Activated B cell treated with CpG ODN at 0.5 μM for 24 hours (primary cell): ENCODE measurements at regions of chr5 and their contacts with region 1.

Region 1: GRCh38 chr5:78221964-78222451 is 72.5 kb downstream of the AP3B1 start:
- DNase-seq: peak; percentile 47
- ATAC-seq: peak; percentile 100
- H3K4me3 Mint-ChIP-seq: peak overlapping the region; percentile 1
- H3K27ac Mint-ChIP-seq: peak overlapping the region; percentile 54
- H3K4me1 Mint-ChIP-seq: peaks cover 18% of the 10 kb centered on the region
- H3K27me3 Mint-ChIP-seq: no peaks in the 10 kb centered on the region
- CTCF ChIP-seq: no peak

Region 2: DNA sequence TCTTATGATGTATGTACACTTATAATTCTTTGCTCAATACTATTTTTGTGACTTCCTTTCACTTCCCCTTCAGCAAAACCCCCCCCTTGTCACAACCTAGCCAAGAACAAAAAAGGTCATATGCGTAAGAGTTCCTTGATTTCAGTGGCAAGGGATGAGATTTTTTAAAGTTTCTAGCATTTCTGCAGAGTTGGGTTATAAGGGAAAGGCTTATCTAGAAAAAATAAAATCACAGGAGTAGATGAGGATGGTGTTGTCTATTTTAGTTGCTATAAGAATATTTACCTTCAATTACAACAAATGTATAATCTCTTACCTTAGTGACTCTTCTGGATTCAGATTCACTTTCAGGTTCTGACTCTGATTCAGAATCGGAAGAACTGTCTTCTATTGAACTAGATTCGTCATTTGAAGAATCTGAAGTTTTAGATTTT is 112.1 kb before region 1 on chr5:
- CTCF ChIA-PET with region 1: no interaction called
- POLR2A ChIA-PET with region 1: no interaction called
- intact Hi-C with region 1: loop called (anchors 2 kb)
- DNase-seq: no peak
- ATAC-seq: peak; percentile 76
- H3K4me3 Mint-ChIP-seq: peak overlapping the region; percentile 75
- H3K27ac Mint-ChIP-seq: peak overlapping the region; percentile 87
- H3K4me1 Mint-ChIP-seq: peaks cover 69% of the 10 kb centered on the region
- H3K27me3 Mint-ChIP-seq: no peaks in the 10 kb centered on the region
- CTCF ChIP-seq: no peak

Region 3: DNA sequence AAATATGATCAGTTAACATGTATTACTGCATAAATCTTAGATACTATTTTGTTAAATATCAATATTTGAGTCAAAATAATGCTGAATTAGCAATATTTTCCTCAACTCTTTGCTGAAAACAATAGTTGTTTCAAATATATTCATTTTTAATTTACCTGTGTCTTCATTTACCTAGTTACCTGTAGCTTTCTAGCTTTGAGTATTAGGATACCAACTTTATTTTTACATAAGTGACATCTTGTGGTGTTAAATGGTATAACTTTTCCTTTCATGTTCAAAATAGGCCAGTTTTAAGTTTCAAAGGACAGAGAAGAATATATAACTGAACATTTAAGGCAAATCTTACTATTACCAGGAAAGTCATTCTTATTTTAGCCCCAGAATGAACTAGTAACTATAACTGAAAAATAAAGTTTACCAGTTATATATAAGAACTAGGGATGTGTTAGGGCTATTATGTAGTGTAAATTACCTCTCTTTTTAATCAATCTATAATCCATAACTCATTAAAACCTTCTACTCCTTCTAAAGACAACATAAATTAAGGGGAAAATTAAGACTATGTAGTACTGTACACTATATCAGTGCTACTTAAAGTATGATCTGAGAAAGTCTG is 47.2 kb after region 1 on chr5:
- CTCF ChIA-PET with region 1: interaction called, 22 read pairs
- POLR2A ChIA-PET with region 1: no interaction called
- intact Hi-C with region 1: loop called (anchors 1 kb)
- DNase-seq: no peak
- ATAC-seq: peak; percentile 61
- H3K4me3 Mint-ChIP-seq: no peak overlapping the region
- H3K27ac Mint-ChIP-seq: no peak overlapping the region
- H3K4me1 Mint-ChIP-seq: peaks cover 21% of the 10 kb centered on the region
- H3K27me3 Mint-ChIP-seq: no peaks in the 10 kb centered on the region
- CTCF ChIP-seq: peak; percentile 36

Region 4: GRCh38 chr5:78359831-78360673 is 138.0 kb after region 1 on chr5 and contains the start of gene SCAMP1:
- CTCF ChIA-PET with region 1: no interaction called
- POLR2A ChIA-PET with region 1: interaction called, 10 read pairs
- intact Hi-C with region 1: loop called (anchors 1 kb)
- DNase-seq: peak; percentile 99
- ATAC-seq: peak; percentile 87
- H3K4me3 Mint-ChIP-seq: peak within 1 kb of the TSS; percentile 95
- H3K27ac Mint-ChIP-seq: peak within 1 kb of the TSS; percentile 96
- H3K4me1 Mint-ChIP-seq: peaks cover 33% of the 10 kb centered on the region
- H3K27me3 Mint-ChIP-seq: no peaks in the 10 kb centered on the region
- CTCF ChIP-seq: no peak
- total RNA-seq, gene SCAMP1: 8.5 and 9.6 TPM in 2 replicates

Region 5: GRCh38 chr5:79235634-79236363 is 1013.8 kb after region 1 on chr5 and contains the start of gene JMY:
- CTCF ChIA-PET with region 1: no interaction called
- POLR2A ChIA-PET with region 1: no interaction called
- intact Hi-C with region 1: loop called (anchors 5 kb)
- DNase-seq: peak; percentile 68
- ATAC-seq: peak; percentile 79
- H3K4me3 Mint-ChIP-seq: peak within 1 kb of the TSS; percentile 91
- H3K27ac Mint-ChIP-seq: peak within 1 kb of the TSS; percentile 94
- H3K4me1 Mint-ChIP-seq: peaks cover 34% of the 10 kb centered on the region
- H3K27me3 Mint-ChIP-seq: no peaks in the 10 kb centered on the region
- CTCF ChIP-seq: no peak
- total RNA-seq, gene JMY: 6.4 and 6.9 TPM in 2 replicates